GM23248 (cell line): ENCODE measurements at regions of chr4 and their contacts with region 1.

Region 1: DNA sequence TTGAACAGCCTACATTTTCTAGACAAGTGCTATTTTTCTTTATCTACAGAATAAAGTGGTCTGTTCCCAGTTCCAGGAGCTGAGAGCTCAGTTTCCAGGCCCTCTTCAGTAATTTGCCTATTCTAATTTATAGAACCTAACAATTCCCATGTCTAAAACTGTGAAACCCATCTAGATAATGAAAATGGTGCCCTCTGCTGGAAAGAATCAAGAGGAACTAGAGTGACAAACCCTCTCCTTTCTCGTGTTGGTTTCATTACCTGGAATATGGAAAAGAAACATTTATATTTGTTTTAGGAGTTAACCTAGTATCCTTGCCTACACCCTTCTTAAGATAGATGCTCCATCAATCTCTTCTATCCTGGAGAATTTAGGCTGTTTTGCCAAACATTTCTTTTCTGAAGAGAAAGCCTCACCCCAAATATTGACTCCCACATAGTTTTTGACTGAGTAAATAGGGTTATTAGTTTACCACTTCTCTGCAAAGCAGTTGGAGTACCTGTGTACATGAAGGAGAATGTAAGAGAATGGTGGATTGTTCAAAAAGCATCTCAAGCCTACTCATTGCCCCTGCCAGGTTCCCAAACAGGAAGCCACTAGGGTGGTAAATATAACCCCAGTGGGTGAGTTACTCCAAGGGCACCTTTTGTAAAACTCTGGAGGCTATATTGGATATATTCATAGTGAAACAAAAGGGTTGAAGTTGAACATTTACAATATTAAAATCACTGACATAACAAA is 121.6 kb downstream of the RASL11B start:
- DNase-seq: peak; percentile 79
- H3K4me3 ChIP-seq: no peak overlapping the region
- H3K27ac ChIP-seq: no peak overlapping the region
- H3K4me1 ChIP-seq: peaks cover 16% of the 10 kb centered on the region
- H3K27me3 ChIP-seq: no peaks in the 10 kb centered on the region

Region 2: DNA sequence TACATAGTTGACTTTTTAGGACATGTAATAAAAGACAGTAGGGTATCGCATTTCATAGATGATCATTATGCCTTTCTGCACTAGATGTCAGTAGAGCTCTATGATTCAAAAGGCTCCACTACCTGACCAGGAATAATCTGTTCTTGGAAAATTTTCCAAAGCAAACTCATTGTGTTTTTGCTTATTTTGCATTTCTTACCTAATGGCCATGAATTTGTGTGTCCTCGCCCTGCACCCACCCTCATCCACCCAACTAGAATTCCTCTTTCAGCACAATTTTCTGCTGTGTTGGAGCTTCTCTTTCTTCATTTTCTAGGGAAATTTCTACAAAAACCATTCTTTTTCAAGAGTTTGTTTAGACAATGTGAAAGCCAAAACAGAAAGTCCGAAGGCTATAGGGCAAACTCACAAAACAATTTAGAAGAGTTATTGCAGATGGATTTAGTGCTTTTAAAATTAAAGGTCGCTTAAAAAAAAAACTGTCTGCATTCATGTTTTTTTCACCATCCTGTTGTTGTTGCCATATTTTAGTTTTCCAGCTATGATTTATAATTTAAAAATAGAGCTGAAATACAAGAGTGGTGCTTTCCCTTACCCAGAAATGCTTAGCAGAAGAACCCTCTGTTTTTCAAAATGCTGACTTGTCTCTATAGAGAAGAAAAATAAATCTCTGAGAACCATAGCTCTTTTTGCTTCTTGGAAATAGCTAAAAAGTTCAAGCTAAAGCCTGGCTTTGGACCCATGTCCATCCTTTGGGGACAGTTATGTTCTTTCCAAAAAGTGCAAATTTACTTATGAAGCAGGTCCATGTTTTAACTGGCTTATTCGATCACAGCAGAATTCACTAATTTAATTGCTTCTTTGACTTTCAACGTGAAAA is 748.9 kb before region 1 on chr4:
- in situ Hi-C with region 1: loop called (anchors 25 kb)
- DNase-seq: peak; percentile 55
- H3K4me3 ChIP-seq: no peak overlapping the region
- H3K27ac ChIP-seq: no peak overlapping the region
- H3K4me1 ChIP-seq: no peaks in the 10 kb centered on the region
- H3K27me3 ChIP-seq: 0 out of 2 replicates have a peak, but pooled peaks cover 11% of the 10 kb centered on the region

Region 3: DNA sequence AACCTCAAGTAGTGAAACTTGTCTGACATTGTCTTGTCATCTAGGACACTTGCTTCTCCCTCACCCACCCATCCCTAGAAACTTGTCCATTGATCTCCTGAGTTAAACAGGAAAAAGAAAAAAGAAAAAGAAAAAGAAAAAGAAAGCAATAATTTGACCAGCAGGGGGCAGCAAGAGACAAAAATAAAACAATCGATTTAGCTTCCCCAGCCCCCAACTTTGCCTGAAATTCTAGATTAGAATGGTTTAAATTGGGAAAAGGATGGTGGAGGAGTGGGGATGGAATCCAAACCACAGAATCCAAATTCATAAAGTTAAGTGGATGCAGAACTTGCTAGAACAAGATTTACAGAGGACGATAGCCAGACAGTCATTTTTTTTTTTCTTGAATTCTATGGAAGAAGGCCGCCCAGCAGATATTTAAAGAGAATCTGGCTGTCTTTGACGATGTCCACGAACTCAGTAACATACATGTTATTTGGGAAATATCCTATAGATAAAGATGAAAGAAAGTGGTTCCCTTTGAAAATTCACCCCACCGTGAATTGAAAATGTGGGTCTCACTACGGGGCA is 607.5 kb before region 1 on chr4:
- in situ Hi-C with region 1: loop called (anchors 10 kb)
- DNase-seq: peak; percentile 73
- H3K4me3 ChIP-seq: no peak overlapping the region
- H3K27ac ChIP-seq: no peak overlapping the region
- H3K4me1 ChIP-seq: no peaks in the 10 kb centered on the region
- H3K27me3 ChIP-seq: peaks cover 21% of the 10 kb centered on the region

Region 4: GRCh38 chr4:52545099-52546069 is 438.3 kb before region 1 on chr4:
- in situ Hi-C with region 1: loop called (anchors 10 kb)
- DNase-seq: peak; percentile 84
- H3K4me3 ChIP-seq: peak overlapping the region; percentile 62
- H3K27ac ChIP-seq: no peak overlapping the region
- H3K4me1 ChIP-seq: no peaks in the 10 kb centered on the region
- H3K27me3 ChIP-seq: no peaks in the 10 kb centered on the region

Region 5: DNA sequence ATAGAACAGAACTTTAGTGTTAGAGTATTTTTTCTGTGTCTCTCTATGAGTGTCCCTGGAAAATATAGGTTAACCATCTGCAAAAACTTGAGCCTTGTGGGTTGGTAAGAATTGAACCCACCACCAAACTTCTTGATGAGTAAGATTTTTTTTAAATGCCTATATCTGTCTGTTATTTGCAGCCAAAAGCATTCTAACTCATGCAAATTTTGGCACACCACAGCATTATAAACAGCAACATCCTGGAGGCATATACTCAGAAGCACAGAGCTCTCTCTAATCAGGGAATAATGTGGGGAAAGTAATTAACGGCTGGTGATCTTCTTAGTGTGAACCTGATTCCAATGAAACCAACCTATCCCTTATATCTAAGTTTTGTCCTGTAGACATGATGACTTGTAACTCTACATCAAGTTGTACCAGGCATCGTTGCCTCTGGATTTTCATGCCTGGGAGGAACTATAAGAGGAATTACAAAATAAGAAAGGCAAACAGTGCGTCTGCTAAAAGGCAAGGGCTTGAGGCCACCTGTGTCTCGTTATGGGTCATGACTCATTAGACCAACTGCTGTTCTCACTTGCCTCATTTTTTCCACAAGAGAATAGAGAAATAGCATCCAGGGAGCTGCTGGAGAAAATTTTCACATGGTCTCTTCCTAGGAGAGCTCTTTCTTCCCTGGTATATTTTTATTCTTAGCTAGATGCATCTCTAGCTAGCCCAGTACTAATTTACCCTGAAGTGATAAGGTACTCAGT is 878.3 kb after region 1 on chr4:
- in situ Hi-C with region 1: no loop called
- DNase-seq: peak; percentile 97
- H3K4me3 ChIP-seq: 0 out of 2 replicates have a peak overlapping the region, but pooled peaks have one; percentile 13
- H3K27ac ChIP-seq: peak overlapping the region; percentile 75
- H3K4me1 ChIP-seq: peaks cover 20% of the 10 kb centered on the region
- H3K27me3 ChIP-seq: no peaks in the 10 kb centered on the region